Ovary (tissue), 10 donors: ENCODE measurements at regions of chr16 and their contacts with region 1.

Region 1: GRCh38 chr16:51172368-51172767 is 21.3 kb upstream of the SALL1 start:
- DNase-seq: no peak
- H3K4me3 ChIP-seq: no peak overlapping the region
- H3K27ac ChIP-seq: no peak overlapping the region
- H3K4me1 ChIP-seq: no peaks in the 10 kb centered on the region
- H3K27me3 ChIP-seq: no peaks in the 10 kb centered on the region
- CTCF ChIP-seq: no peak
- EP300 ChIP-seq: no peak
- POLR2A ChIP-seq: no peak

Region 2: DNA sequence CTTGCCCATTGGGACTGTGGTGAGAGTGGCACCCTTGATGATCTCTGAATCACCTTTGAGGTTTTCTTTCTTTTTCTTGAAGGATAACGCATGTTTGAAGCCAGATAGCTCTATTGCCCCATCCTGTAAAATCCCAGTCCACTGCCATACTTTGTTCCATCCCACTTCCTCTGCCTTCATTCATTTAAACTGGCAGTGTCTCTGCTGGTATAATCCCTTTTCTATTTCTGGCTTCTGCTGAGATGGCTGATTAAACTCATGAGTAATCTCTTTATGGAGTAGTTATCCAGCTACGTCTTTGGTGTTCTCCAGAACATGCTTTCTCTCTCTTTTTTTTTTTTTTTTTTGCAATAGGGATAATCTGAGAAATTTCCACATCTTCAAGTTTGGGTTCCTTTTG is 635.2 kb after region 1 on chr16:
- intact Hi-C with region 1: loop called in 1 of 4 experiments (anchors 5 kb)
- DNase-seq: no peak
- H3K4me3 ChIP-seq: no peak overlapping the region
- H3K27ac ChIP-seq: no peak overlapping the region
- H3K4me1 ChIP-seq: no peaks in the 10 kb centered on the region
- H3K27me3 ChIP-seq: no peaks in the 10 kb centered on the region
- CTCF ChIP-seq: no peak
- EP300 ChIP-seq: no peak
- POLR2A ChIP-seq: no peak